Activated B cell treated with CpG ODN at 0.5 μM for 24 hours (primary cell): ENCODE measurements at regions of chr7 and their contacts with region 1.

Region 1: GRCh38 chr7:5822742-5823503 is 41.5 kb upstream of the RNF216 start:
- DNase-seq: peak; percentile 84
- ATAC-seq: peak; percentile 99
- H3K4me3 Mint-ChIP-seq: peak overlapping the region; percentile 89
- H3K27ac Mint-ChIP-seq: peak overlapping the region; percentile 89
- H3K4me1 Mint-ChIP-seq: peaks cover 27% of the 10 kb centered on the region
- H3K27me3 Mint-ChIP-seq: no peaks in the 10 kb centered on the region
- CTCF ChIP-seq: no peak

Region 2: GRCh38 chr7:5780801-5781496 is 42.0 kb before region 1 on chr7:
- CTCF ChIA-PET with region 1: interaction called, 4 read pairs
- POLR2A ChIA-PET with region 1: interaction called, 10 read pairs
- intact Hi-C with region 1: loop called (anchors 1 kb)
- DNase-seq: no peak
- ATAC-seq: peak; percentile 40
- H3K4me3 Mint-ChIP-seq: peak overlapping the region; percentile 88
- H3K27ac Mint-ChIP-seq: peak overlapping the region; percentile 80
- H3K4me1 Mint-ChIP-seq: peaks cover 41% of the 10 kb centered on the region
- H3K27me3 Mint-ChIP-seq: no peaks in the 10 kb centered on the region
- CTCF ChIP-seq: no peak

Region 3: GRCh38 chr7:6283391-6284390 is 460.8 kb after region 1 on chr7:
- CTCF ChIA-PET with region 1: no interaction called
- POLR2A ChIA-PET with region 1: no interaction called
- intact Hi-C with region 1: no loop called
- DNase-seq: no peak
- ATAC-seq: no peak
- H3K4me3 Mint-ChIP-seq: no peak overlapping the region
- H3K27ac Mint-ChIP-seq: no peak overlapping the region
- H3K4me1 Mint-ChIP-seq: no peaks in the 10 kb centered on the region
- H3K27me3 Mint-ChIP-seq: no peaks in the 10 kb centered on the region
- CTCF ChIP-seq: no peak

Region 4: GRCh38 chr7:7274782-7275181 is 1451.9 kb after region 1 on chr7:
- CTCF ChIA-PET with region 1: no interaction called
- POLR2A ChIA-PET with region 1: no interaction called
- intact Hi-C with region 1: no loop called
- DNase-seq: no peak
- ATAC-seq: no peak
- H3K4me3 Mint-ChIP-seq: no peak overlapping the region
- H3K27ac Mint-ChIP-seq: no peak overlapping the region
- H3K4me1 Mint-ChIP-seq: peaks cover 22% of the 10 kb centered on the region
- H3K27me3 Mint-ChIP-seq: no peaks in the 10 kb centered on the region
- CTCF ChIP-seq: no peak